ENCODE measurements at regions of chr15 and their contacts with region 1.

Region 1: DNA sequence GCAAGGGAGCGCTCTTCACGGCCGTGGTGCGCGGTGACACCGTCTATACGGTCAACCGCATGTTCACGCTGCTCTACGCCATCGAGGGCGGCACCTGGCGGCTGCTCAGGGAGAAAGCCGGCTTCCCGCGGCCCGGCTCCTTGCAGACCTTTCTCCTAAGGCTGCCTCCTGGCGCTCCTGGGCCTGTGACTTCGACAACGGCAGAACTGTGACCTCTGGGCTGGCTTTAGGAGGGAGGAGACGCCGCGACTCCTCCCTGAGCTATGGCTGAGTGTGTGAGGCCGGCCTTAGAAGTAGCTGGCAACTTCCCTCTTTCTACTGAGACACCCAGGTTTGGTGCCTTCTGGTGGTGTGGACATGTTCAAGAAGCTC is 1.4 kb downstream of the KBTBD13 start:
- DNase-seq: peak; percentile 58
- H3K4me3 Mint-ChIP-seq: no peak overlapping the region
- H3K27ac Mint-ChIP-seq: no peak overlapping the region
- H3K4me1 Mint-ChIP-seq: peaks cover 15% of the 10 kb centered on the region
- H3K27me3 Mint-ChIP-seq: peaks cover 39% of the 10 kb centered on the region

Region 2: DNA sequence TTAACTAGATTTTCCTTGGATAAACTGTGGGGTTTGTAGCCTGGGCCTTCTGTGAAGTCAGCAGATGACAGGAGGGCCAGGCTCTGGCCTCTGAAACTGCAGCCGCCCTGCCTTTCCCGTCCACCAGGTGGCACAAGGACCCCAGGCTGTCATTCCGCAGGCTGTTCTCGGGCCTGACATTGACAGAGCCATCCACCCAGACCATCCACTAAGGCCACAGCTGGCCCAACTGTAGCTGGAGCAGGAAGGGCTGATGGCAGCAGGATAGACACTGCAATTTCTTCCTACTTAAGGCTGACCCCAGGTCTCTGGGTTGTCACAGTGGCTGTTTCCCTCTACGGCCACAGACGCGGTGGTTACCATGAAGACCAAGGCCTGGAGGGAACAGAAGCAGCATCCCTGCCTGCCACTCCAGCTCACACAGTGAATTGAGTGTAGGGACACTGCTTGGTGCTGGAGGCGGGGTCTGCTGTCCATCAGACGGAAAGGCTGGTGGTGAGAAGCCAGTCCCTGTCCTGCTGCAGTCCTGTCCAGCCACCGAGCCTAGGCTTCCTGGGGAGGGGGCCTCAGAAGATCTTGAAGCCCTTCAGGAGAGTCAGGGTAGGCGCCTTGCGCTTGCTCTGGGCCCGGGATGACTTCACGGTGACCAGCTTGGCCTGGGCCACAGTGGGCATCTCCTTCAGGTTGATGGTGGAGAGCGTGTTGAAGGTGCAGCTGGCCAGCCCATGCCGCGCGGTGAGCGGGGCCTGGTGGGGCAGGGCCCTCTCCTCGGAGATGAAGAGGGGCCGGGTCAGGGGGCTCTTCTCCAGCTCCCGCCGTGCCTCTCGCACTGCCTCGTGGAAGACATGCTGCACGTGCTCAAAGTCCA is 23.4 kb before region 1 on chr15:
- CTCF ChIA-PET with region 1: interaction called, 12 read pairs
- POLR2A ChIA-PET with region 1: no interaction called
- DNase-seq: peak; percentile 68
- H3K4me3 Mint-ChIP-seq: no peak overlapping the region
- H3K27ac Mint-ChIP-seq: no peak overlapping the region
- H3K4me1 Mint-ChIP-seq: peaks cover 22% of the 10 kb centered on the region
- H3K27me3 Mint-ChIP-seq: no peaks in the 10 kb centered on the region